Activated CD8-positive, alpha-beta T cell treated with anti-CD3 and anti-CD28 coated beads for 36 hours (primary cell): ENCODE measurements at regions of chr10 and their contacts with region 1.

Region 1: GRCh38 chr10:103504181-103504783 is 10.8 kb downstream of the NEURL1 start:
- DNase-seq: peak; percentile 65
- ATAC-seq: peak; percentile 89
- H3K4me3 Mint-ChIP-seq: no peak overlapping the region
- H3K27ac Mint-ChIP-seq: peak overlapping the region; percentile 41
- H3K4me1 Mint-ChIP-seq: peaks cover 23% of the 10 kb centered on the region
- H3K27me3 Mint-ChIP-seq: peaks cover 32% of the 10 kb centered on the region
- CTCF ChIP-seq: no peak

Region 2: GRCh38 chr10:103333925-103334520 is 170.3 kb before region 1 on chr10:
- CTCF ChIA-PET with region 1: no interaction called
- POLR2A ChIA-PET with region 1: no interaction called
- intact Hi-C with region 1: no loop called
- DNase-seq: no peak
- ATAC-seq: no peak
- H3K4me3 Mint-ChIP-seq: no peak overlapping the region
- H3K27ac Mint-ChIP-seq: no peak overlapping the region
- H3K4me1 Mint-ChIP-seq: no peaks in the 10 kb centered on the region
- H3K27me3 Mint-ChIP-seq: no peaks in the 10 kb centered on the region
- CTCF ChIP-seq: peak; percentile 72

Region 3: GRCh38 chr10:103491493-103492381 is 12.5 kb before region 1 on chr10:
- CTCF ChIA-PET with region 1: interaction called, 26 read pairs
- POLR2A ChIA-PET with region 1: interaction called, 4 read pairs
- intact Hi-C with region 1: no loop called
- DNase-seq: no peak
- ATAC-seq: no peak
- H3K4me3 Mint-ChIP-seq: no peak overlapping the region
- H3K27ac Mint-ChIP-seq: no peak overlapping the region
- H3K4me1 Mint-ChIP-seq: peaks cover 27% of the 10 kb centered on the region
- H3K27me3 Mint-ChIP-seq: peaks cover 34% of the 10 kb centered on the region
- CTCF ChIP-seq: no peak

Region 4: DNA sequence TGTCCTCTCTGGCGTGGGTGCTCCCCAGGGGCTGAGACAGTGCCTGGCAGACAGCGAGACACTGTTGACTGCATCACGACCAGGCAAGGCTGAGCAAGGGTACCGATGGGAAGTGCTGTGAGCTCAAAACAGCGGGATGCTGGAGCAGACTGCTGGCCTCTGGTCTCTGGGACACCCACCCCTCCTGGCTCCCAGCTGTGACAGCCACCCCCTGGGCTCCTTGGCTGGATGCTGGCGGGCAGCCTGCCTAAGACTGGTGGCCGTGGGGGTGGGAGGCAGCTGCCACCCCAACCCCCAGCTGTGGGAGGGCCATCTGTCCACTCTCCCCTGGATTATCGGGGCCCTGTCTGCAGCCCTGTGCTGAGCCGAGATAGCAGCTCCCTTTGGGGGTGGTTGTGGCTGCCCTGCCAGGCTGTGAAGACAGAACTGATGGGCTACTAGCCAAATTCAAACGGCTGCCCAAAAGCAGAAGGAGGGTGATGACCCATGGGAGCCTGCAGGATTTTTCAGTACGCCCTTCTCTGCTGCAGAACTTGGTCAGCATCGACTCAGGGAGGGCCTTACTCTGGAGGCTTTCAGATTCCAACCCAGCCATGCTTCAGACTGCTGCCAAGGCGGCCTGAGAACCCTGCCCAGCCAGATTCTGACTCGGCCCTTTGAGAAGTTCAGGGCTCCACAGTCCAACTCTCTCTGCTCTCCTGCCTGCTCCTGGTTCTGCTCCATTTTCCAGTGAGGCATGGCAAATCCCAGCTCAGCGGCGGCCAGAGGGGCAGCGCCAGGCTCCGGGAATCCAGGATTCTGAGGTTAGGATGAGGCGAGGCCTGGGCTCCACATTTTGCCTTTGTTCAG is 114.5 kb after region 1 on chr10:
- CTCF ChIA-PET with region 1: no interaction called
- POLR2A ChIA-PET with region 1: no interaction called
- intact Hi-C with region 1: no loop called
- DNase-seq: no peak
- ATAC-seq: no peak
- H3K4me3 Mint-ChIP-seq: no peak overlapping the region
- H3K27ac Mint-ChIP-seq: no peak overlapping the region
- H3K4me1 Mint-ChIP-seq: no peaks in the 10 kb centered on the region
- H3K27me3 Mint-ChIP-seq: no peaks in the 10 kb centered on the region
- CTCF ChIP-seq: no peak